ENCODE measurements at regions of chr1 and their contacts with region 1.

Region 1: DNA sequence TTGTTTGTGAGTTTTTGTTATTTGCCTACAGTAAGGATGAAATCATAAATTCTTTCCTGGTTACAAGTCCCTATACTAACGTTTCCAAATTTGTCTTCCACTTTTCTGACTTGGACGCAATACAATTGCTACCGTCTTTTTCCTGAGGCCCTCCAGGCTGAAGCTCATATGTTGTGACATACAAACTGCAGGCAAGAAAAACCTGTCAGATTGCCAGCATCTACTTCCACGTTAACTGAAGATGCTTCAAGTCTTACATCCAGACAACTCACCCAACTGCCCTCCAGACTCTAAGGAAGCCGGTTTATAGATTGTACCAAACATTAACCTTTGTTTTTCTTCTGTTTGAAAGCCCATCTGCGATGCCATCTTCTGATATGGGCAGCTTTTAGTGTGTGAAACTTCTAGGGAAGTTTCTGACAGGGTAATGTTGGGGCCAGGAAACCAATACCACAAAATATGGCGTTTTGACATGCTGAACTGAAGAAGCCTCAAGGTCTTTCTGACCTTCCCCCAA is 21.4 kb upstream of the RNF11 start:
- DNase-seq: peak; percentile 88
- ATAC-seq: peak; percentile 60
- H3K4me3 ChIP-seq: peak overlapping the region; percentile 23; the same call in 1 of the 2 replicates
- H3K27ac ChIP-seq: peak overlapping the region; percentile 63
- H3K4me1 ChIP-seq: peaks cover 28% of the 10 kb centered on the region
- H3K27me3 ChIP-seq: no peaks in the 10 kb centered on the region
- CTCF ChIP-seq: no peak

Region 2: GRCh38 chr1:49854741-49855140 is 1359.9 kb before region 1 on chr1:
- CTCF ChIA-PET with region 1: no interaction called
- POLR2A ChIA-PET with region 1: interaction called, 12 read pairs
- intact Hi-C with region 1: no loop called
- DNase-seq: no peak
- ATAC-seq: no peak
- H3K4me3 ChIP-seq: no peak overlapping the region
- H3K27ac ChIP-seq: no peak overlapping the region
- H3K4me1 ChIP-seq: no peaks in the 10 kb centered on the region
- H3K27me3 ChIP-seq: no peaks in the 10 kb centered on the region
- CTCF ChIP-seq: no peak

Measured in PC-3 (cell line).